ENCODE measurements at regions of chr4 and their contacts with region 1.

Region 1: GRCh38 chr4:13654158-13654797 is 26.8 kb upstream of the BOD1L1 start:
- DNase-seq: peak; percentile 64
- H3K4me3 ChIP-seq: peak overlapping the region in 2 of 3 experiments; percentile 23 to 26
- H3K27ac ChIP-seq: no peak overlapping the region
- H3K4me1 ChIP-seq: peaks cover 4% of the 10 kb centered on the region
- H3K27me3 ChIP-seq: peaks cover 4 to 5% of the 10 kb centered on the region in 2 experiments
- CTCF ChIP-seq: peak; percentile 69 to 90
- POLR2A ChIP-seq: no peak

Region 2: GRCh38 chr4:12852338-12853307 is 801.7 kb before region 1 on chr4:
- CTCF ChIA-PET with region 1: interaction called, 12 read pairs
- POLR2A ChIA-PET with region 1: no interaction called
- dilution Hi-C with region 1: no loop called
- intact Hi-C with region 1: loop called (anchors 5 kb)
- DNase-seq: peak; percentile 49
- H3K4me3 ChIP-seq: no peak overlapping the region
- H3K27ac ChIP-seq: no peak overlapping the region
- H3K4me1 ChIP-seq: no peaks in the 10 kb centered on the region
- H3K27me3 ChIP-seq: no peaks in the 10 kb centered on the region
- CTCF ChIP-seq: peak in 1 of 2 donors; percentile 25
- POLR2A ChIP-seq: no peak

Region 3: GRCh38 chr4:13640149-13640940 is 13.9 kb before region 1 on chr4:
- CTCF ChIA-PET with region 1: interaction called, 23 read pairs
- POLR2A ChIA-PET with region 1: no interaction called
- dilution Hi-C with region 1: no loop called
- intact Hi-C with region 1: no loop called
- DNase-seq: no peak
- H3K4me3 ChIP-seq: no peak overlapping the region
- H3K27ac ChIP-seq: no peak overlapping the region
- H3K4me1 ChIP-seq: no peaks in the 10 kb centered on the region
- H3K27me3 ChIP-seq: peaks cover 0 to 3% of the 10 kb centered on the region in 2 experiments
- CTCF ChIP-seq: no peak
- POLR2A ChIP-seq: no peak

Region 4: DNA sequence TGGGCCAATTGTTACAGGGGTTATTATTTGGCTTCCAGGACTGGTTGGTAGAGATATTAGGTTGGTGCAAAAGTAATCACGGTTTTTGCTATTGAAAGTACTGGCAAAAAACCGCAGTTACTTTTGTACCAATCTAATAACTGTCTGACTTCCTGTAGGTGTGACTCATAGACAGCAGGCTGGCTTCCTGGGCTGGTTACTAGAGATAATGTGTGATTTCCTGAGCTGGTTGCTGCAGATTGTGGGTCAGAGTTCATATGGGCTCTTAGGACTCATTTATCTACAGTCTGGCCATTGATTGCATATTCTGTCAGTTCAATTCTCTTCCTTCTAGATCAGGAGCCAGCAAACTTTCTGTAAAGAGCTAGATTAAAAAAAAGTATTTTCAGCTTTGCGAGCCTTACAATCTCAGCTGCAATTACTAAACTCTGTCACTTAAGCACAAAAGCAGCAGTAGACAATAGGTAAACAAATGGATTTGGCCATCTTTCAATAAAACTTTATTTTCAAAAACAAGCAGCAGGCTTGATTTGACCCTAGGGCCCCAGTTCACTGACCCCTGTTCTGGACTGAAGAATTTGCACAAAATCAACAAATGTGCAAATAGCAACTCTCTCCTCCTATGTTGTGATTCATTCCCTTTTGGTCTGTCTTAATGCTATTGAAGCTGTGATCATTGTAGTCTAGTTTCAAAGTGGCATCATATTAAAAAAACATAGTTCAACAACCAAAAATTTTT is 24.1 kb after region 1 on chr4:
- CTCF ChIA-PET with region 1: no interaction called
- POLR2A ChIA-PET with region 1: no interaction called
- dilution Hi-C with region 1: no loop called
- intact Hi-C with region 1: no loop called
- DNase-seq: peak; percentile 3
- H3K4me3 ChIP-seq: no peak overlapping the region
- H3K27ac ChIP-seq: no peak overlapping the region
- H3K4me1 ChIP-seq: no peaks in the 10 kb centered on the region
- H3K27me3 ChIP-seq: no peaks in the 10 kb centered on the region
- CTCF ChIP-seq: no peak
- POLR2A ChIP-seq: no peak

Region 5: GRCh38 chr4:14184265-14184664 is 530.0 kb after region 1 on chr4:
- CTCF ChIA-PET with region 1: no interaction called
- POLR2A ChIA-PET with region 1: no interaction called
- dilution Hi-C with region 1: loop called (anchors 25 kb)
- intact Hi-C with region 1: loop called (anchors 10 kb)
- DNase-seq: peak; percentile 49
- H3K4me3 ChIP-seq: no peak overlapping the region
- H3K27ac ChIP-seq: no peak overlapping the region
- H3K4me1 ChIP-seq: peaks cover 25% of the 10 kb centered on the region
- H3K27me3 ChIP-seq: peaks cover 0 to 2% of the 10 kb centered on the region in 2 experiments
- CTCF ChIP-seq: no peak
- POLR2A ChIP-seq: no peak

Region 6: GRCh38 chr4:15162465-15163283 is 1508.4 kb after region 1 on chr4:
- CTCF ChIA-PET with region 1: interaction called, 7 read pairs
- POLR2A ChIA-PET with region 1: no interaction called
- dilution Hi-C with region 1: no loop called
- intact Hi-C with region 1: loop called (anchors 1 kb)
- DNase-seq: peak; percentile 16
- H3K4me3 ChIP-seq: no peak overlapping the region
- H3K27ac ChIP-seq: no peak overlapping the region
- H3K4me1 ChIP-seq: no peaks in the 10 kb centered on the region
- H3K27me3 ChIP-seq: peaks cover 0 to 9% of the 10 kb centered on the region in 2 experiments
- CTCF ChIP-seq: peak; percentile 7 to 38
- POLR2A ChIP-seq: no peak

Region 7: GRCh38 chr4:15396157-15396800 is 1742.0 kb after region 1 on chr4:
- CTCF ChIA-PET with region 1: interaction called, 32 read pairs
- POLR2A ChIA-PET with region 1: no interaction called
- dilution Hi-C with region 1: no loop called
- intact Hi-C with region 1: loop called (anchors 1 kb)
- DNase-seq: peak; percentile 45
- H3K4me3 ChIP-seq: no peak overlapping the region
- H3K27ac ChIP-seq: no peak overlapping the region
- H3K4me1 ChIP-seq: no peaks in the 10 kb centered on the region
- H3K27me3 ChIP-seq: no peaks in the 10 kb centered on the region
- CTCF ChIP-seq: peak; percentile 50 to 67
- POLR2A ChIP-seq: no peak